ENCODE measurements at regions of chr3 and their contacts with region 1.

Region 1: GRCh38 chr3:178966299-178967176 is 105.1 kb downstream of the ZMAT3 start:
- DNase-seq: no peak
- H3K4me3 ChIP-seq: no peak overlapping the region
- H3K27ac ChIP-seq: no peak overlapping the region
- H3K4me1 ChIP-seq: peaks cover 0 to 15% (median 8%) of the 10 kb centered on the region in 4 donors
- H3K27me3 ChIP-seq: no peaks in the 10 kb centered on the region
- CTCF ChIP-seq: peak; percentile 30 to 53 (median 52)
- EP300 ChIP-seq: no peak
- POLR2A ChIP-seq: no peak

Region 2: DNA sequence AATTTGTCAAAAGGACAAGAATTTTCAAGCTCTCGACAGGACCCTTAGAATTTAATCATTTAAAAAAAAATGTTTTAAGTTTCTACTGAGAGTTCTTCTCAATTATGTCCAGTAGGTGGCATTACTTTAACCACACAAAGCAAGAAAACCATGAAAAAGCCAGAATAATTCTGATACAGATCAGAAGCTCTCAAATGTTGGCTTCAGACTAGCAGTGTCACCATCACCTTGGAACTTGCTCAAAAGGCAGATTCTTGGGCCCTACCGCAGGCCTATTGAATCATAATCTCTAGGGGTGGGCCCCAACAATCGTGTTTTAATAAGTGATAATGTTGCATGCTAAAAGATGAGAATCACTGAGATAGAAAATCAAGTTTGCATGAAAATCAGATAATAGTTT is 529.8 kb before region 1 on chr3:
- in situ Hi-C with region 1: loop called in 3 of 4 experiments (anchors 25 kb)
- intact Hi-C with region 1: loop called (anchors 10 kb)
- DNase-seq: no peak
- H3K4me3 ChIP-seq: no peak overlapping the region
- H3K27ac ChIP-seq: no peak overlapping the region
- H3K4me1 ChIP-seq: peaks cover 0 to 5% (median 0%) of the 10 kb centered on the region in 4 donors
- H3K27me3 ChIP-seq: no peaks in the 10 kb centered on the region
- CTCF ChIP-seq: peak; percentile 47 to 61 (median 55)
- EP300 ChIP-seq: no peak
- POLR2A ChIP-seq: no peak

Region 3: DNA sequence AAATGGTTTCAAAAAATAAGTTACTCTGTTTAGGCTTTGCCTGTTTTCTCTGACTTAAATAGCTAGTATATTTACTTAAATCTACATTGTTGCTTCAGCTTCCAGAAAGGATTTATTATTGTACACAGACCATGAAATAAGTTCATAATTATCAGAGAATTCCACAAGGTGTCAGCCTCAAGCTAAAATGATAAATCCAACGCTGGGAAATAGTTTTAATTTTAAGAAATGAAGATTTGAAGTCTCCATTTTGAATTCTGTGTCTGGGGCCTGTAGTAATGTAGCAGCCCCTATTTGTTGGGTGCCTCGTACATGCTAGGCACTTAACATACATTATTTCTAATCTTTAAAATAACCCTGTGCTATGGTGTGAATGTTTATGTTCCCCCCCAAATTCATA is 522.9 kb before region 1 on chr3:
- in situ Hi-C with region 1: loop called in 3 of 4 experiments (anchors 25 kb)
- intact Hi-C with region 1: loop called (anchors 10 kb)
- DNase-seq: no peak
- H3K4me3 ChIP-seq: no peak overlapping the region
- H3K27ac ChIP-seq: no peak overlapping the region
- H3K4me1 ChIP-seq: no peaks in the 10 kb centered on the region
- H3K27me3 ChIP-seq: no peaks in the 10 kb centered on the region
- CTCF ChIP-seq: no peak
- EP300 ChIP-seq: no peak
- POLR2A ChIP-seq: no peak

Region 4: GRCh38 chr3:179493260-179493659 is 526.7 kb after region 1 on chr3:
- in situ Hi-C with region 1: no loop called
- intact Hi-C with region 1: no loop called
- DNase-seq: no peak
- H3K4me3 ChIP-seq: no peak overlapping the region
- H3K27ac ChIP-seq: no peak overlapping the region
- H3K4me1 ChIP-seq: no peaks in the 10 kb centered on the region
- H3K27me3 ChIP-seq: no peaks in the 10 kb centered on the region
- CTCF ChIP-seq: no peak
- EP300 ChIP-seq: no peak
- POLR2A ChIP-seq: no peak

Region 5: GRCh38 chr3:179967622-179968021 is 1001.1 kb after region 1 on chr3:
- in situ Hi-C with region 1: no loop called
- intact Hi-C with region 1: no loop called
- DNase-seq: no peak
- H3K4me3 ChIP-seq: no peak overlapping the region
- H3K27ac ChIP-seq: no peak overlapping the region
- H3K4me1 ChIP-seq: no peaks in the 10 kb centered on the region
- H3K27me3 ChIP-seq: no peaks in the 10 kb centered on the region
- CTCF ChIP-seq: no peak
- EP300 ChIP-seq: no peak
- POLR2A ChIP-seq: no peak

Measured in transverse colon (tissue), 4 donors.